CD4-positive, alpha-beta memory T cell (primary cell): ENCODE measurements at regions of chr11 and their contacts with region 1.

Region 1: GRCh38 chr11:63738720-63739360 is 29.7 kb downstream of the ZFTA start:
- DNase-seq: peak; percentile 27 to 65 (median 50)
- H3K4me3 ChIP-seq: no peak overlapping the region
- H3K4me3 Mint-ChIP-seq: no peak overlapping the region
- H3K27ac ChIP-seq: no peak overlapping the region
- H3K27ac Mint-ChIP-seq: peak overlapping the region in 2 of 7 donors; percentile 53 to 85
- H3K4me1 ChIP-seq: no peaks in the 10 kb centered on the region
- H3K4me1 Mint-ChIP-seq: peaks cover 2 to 4% (median 4%) of the 10 kb centered on the region in 4 donors
- H3K27me3 ChIP-seq: no peaks in the 10 kb centered on the region
- H3K27me3 Mint-ChIP-seq: no peaks in the 10 kb centered on the region

Region 2: DNA sequence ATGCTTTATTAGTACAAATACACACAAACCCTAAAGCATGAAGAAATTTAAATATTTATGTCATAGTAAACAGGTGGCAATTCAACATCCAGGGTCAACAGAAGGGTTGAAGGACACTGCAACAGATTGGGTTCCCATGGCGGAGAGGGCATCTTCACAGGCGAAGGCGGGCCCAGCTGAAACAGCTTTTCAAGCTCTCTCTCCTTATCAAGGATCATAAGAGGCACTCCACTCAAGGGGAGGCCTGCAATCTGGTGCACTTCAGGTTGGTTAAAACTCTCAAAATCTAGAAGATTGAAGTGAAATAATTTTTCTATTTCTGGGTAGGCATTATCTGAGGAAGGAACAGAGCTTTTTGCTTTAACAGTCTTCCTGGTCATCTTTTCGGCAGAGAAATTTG is 706.4 kb before region 1 on chr11:
- CTCF ChIA-PET with region 1: interaction called, 3 read pairs
- POLR2A ChIA-PET with region 1: no interaction called
- intact Hi-C with region 1: loop called (anchors 1 kb)
- DNase-seq: no peak
- H3K4me3 ChIP-seq: no peak overlapping the region
- H3K4me3 Mint-ChIP-seq: no peak overlapping the region
- H3K27ac ChIP-seq: no peak overlapping the region
- H3K27ac Mint-ChIP-seq: no peak overlapping the region
- H3K4me1 ChIP-seq: no peaks in the 10 kb centered on the region
- H3K4me1 Mint-ChIP-seq: peaks cover 0 to 5% (median 3%) of the 10 kb centered on the region in 4 donors
- H3K27me3 ChIP-seq: no peaks in the 10 kb centered on the region
- H3K27me3 Mint-ChIP-seq: peaks cover 12 to 42% of the 10 kb centered on the region in 2 donors

Region 3: GRCh38 chr11:63404161-63404935 is 334.5 kb before region 1 on chr11:
- CTCF ChIA-PET with region 1: no interaction called
- POLR2A ChIA-PET with region 1: no interaction called
- intact Hi-C with region 1: no loop called
- DNase-seq: no peak
- H3K4me3 ChIP-seq: no peak overlapping the region
- H3K4me3 Mint-ChIP-seq: no peak overlapping the region
- H3K27ac ChIP-seq: no peak overlapping the region
- H3K27ac Mint-ChIP-seq: no peak overlapping the region
- H3K4me1 ChIP-seq: no peaks in the 10 kb centered on the region
- H3K4me1 Mint-ChIP-seq: no peaks in the 10 kb centered on the region
- H3K27me3 ChIP-seq: no peaks in the 10 kb centered on the region
- H3K27me3 Mint-ChIP-seq: peaks cover 20 to 24% of the 10 kb centered on the region in 2 donors

Region 4: GRCh38 chr11:63573881-63574855 is 164.7 kb before region 1 on chr11:
- CTCF ChIA-PET with region 1: no interaction called
- POLR2A ChIA-PET with region 1: no interaction called
- intact Hi-C with region 1: no loop called
- DNase-seq: peak in 4 of 5 donors; percentile 27 to 52 (median 34)
- H3K4me3 ChIP-seq: peak overlapping the region; percentile 4 to 34
- H3K4me3 Mint-ChIP-seq: peak overlapping the region; percentile 84 to 94 (median 89)
- H3K27ac ChIP-seq: peak overlapping the region; percentile 36
- H3K27ac Mint-ChIP-seq: peak overlapping the region; percentile 25 to 98 (median 90)
- H3K4me1 ChIP-seq: peaks cover 15% of the 10 kb centered on the region
- H3K4me1 Mint-ChIP-seq: peaks cover 14 to 22% (median 19%) of the 10 kb centered on the region in 4 donors
- H3K27me3 ChIP-seq: no peaks in the 10 kb centered on the region
- H3K27me3 Mint-ChIP-seq: no peaks in the 10 kb centered on the region

Region 5: DNA sequence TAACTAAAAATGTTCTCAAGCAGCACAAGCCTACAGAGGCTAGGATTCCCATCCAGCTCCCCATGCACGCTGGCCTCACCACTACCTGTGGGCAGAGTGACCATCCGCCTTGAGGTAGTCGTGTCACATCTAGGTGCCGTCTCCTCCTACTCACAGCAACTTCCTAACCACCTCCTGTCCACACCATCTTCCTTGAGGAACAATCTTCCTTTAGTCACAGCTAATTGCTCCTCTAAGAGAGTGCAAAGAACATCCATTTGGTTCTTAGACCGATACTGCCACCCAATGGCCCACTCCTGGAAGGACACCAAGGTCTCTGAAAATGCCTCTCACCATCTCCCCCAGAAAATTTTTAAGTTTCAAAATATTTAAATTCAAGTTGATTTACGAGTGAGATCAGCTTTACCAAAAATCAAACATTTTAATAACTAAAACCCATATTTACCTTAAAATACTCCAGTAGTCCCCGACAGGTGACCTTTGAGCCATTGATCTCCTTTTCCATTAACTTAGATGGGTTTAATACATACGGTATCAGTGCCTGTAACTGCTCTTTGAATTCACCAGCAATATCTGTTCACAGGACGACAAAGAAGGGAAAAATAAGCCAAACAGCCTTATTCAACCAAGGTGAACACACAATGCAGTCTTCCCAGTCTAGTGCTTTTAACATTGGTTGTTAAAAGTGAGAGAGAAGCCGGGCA is 102.9 kb before region 1 on chr11:
- CTCF ChIA-PET with region 1: interaction called, 109 read pairs
- POLR2A ChIA-PET with region 1: no interaction called
- intact Hi-C with region 1: loop called (anchors 1 kb)
- DNase-seq: peak; percentile 56 to 69 (median 66)
- H3K4me3 ChIP-seq: no peak overlapping the region
- H3K4me3 Mint-ChIP-seq: no peak overlapping the region
- H3K27ac ChIP-seq: no peak overlapping the region
- H3K27ac Mint-ChIP-seq: peak overlapping the region in 1 of 7 donors; percentile 7
- H3K4me1 ChIP-seq: no peaks in the 10 kb centered on the region
- H3K4me1 Mint-ChIP-seq: peaks cover 10 to 14% (median 10%) of the 10 kb centered on the region in 4 donors
- H3K27me3 ChIP-seq: no peaks in the 10 kb centered on the region
- H3K27me3 Mint-ChIP-seq: no peaks in the 10 kb centered on the region

Region 6: GRCh38 chr11:63641727-63642126 is 97.1 kb before region 1 on chr11:
- CTCF ChIA-PET with region 1: interaction called, 109 read pairs
- POLR2A ChIA-PET with region 1: no interaction called
- intact Hi-C with region 1: loop called (anchors 1 kb)
- DNase-seq: no peak
- H3K4me3 ChIP-seq: no peak overlapping the region
- H3K4me3 Mint-ChIP-seq: no peak overlapping the region
- H3K27ac ChIP-seq: no peak overlapping the region
- H3K27ac Mint-ChIP-seq: peak overlapping the region in 3 of 7 donors; percentile 36 to 57 (median 55)
- H3K4me1 ChIP-seq: no peaks in the 10 kb centered on the region
- H3K4me1 Mint-ChIP-seq: peaks cover 7 to 19% (median 12%) of the 10 kb centered on the region in 4 donors
- H3K27me3 ChIP-seq: no peaks in the 10 kb centered on the region
- H3K27me3 Mint-ChIP-seq: no peaks in the 10 kb centered on the region

Region 7: DNA sequence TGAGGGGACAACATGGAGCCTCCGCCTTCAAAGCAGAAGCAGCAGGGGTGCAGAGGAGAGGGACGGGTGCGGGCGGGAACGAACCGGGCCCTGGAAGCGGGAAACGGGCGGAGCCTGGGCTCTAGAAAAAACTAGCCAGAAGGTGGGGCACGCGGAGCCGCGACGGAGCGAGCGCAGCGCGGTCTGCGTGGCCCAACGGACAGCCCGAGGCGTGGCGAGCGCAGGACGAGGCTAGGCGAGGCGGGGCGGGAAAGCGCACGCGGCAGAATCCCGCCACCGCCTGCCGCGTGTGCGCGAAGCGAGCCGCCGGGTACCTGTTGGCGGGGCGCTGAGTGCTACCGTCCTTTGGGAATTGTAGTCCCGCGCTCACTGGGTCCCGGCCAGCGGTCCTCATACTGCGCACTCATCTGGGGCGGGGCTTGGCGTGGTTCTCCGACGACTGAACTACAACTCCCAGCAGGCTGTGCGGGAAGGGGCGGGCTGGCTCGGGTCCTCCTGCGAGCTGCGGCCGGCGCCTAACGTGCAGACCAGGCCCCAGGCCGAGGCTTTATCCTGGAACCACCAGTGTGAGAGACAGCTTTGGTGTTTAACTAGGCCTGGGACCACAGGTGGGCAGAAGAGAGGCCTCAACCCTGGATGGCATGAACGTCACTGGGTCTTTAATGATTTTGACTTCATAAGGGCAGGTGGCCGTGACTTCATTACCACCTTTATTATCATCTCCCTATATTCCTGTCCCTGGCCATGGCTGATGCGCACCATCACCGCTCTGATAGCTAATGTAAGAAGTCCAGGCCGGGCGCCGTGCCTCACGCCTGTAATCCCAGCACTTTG is 67.3 kb before region 1 on chr11 and contains the start of gene ATL3:
- CTCF ChIA-PET with region 1: interaction called, 52 read pairs
- POLR2A ChIA-PET with region 1: interaction called, 13 read pairs
- intact Hi-C with region 1: loop called (anchors 1 kb)
- DNase-seq: peak; percentile 91 to 94 (median 92)
- H3K4me3 ChIP-seq: peak within 1 kb of the TSS; percentile 55 to 91
- H3K4me3 Mint-ChIP-seq: peak within 1 kb of the TSS; percentile 83 to 91 (median 86)
- H3K27ac ChIP-seq: peak within 1 kb of the TSS; percentile 79
- H3K27ac Mint-ChIP-seq: peak within 1 kb of the TSS; percentile 77 to 93 (median 87)
- H3K4me1 ChIP-seq: peaks cover 43% of the 10 kb centered on the region
- H3K4me1 Mint-ChIP-seq: peaks cover 20 to 41% (median 26%) of the 10 kb centered on the region in 4 donors
- H3K27me3 ChIP-seq: no peaks in the 10 kb centered on the region
- H3K27me3 Mint-ChIP-seq: no peaks in the 10 kb centered on the region
- total RNA-seq, gene ATL3: 40.4 to 43.3 TPM

Region 8: GRCh38 chr11:63681321-63682049 is 57.4 kb before region 1 on chr11 and contains the start of gene RTN3:
- CTCF ChIA-PET with region 1: interaction called, 18 read pairs
- POLR2A ChIA-PET with region 1: interaction called, 4 read pairs
- intact Hi-C with region 1: no loop called
- DNase-seq: peak; percentile 98 to 99 (median 98)
- H3K4me3 ChIP-seq: peak within 1 kb of the TSS; percentile 54 to 93
- H3K4me3 Mint-ChIP-seq: peak within 1 kb of the TSS; percentile 89 to 98 (median 92)
- H3K27ac ChIP-seq: peak within 1 kb of the TSS; percentile 86
- H3K27ac Mint-ChIP-seq: peak within 1 kb of the TSS; percentile 71 to 98 (median 91)
- H3K4me1 ChIP-seq: peaks cover 22% of the 10 kb centered on the region
- H3K4me1 Mint-ChIP-seq: peaks cover 18 to 30% (median 24%) of the 10 kb centered on the region in 4 donors
- H3K27me3 ChIP-seq: no peaks in the 10 kb centered on the region
- H3K27me3 Mint-ChIP-seq: peaks cover 0 to 1% of the 10 kb centered on the region in 2 donors
- total RNA-seq, gene RTN3: 41.7 to 41.8 TPM

Region 9: GRCh38 chr11:63710476-63711217 is 28.2 kb before region 1 on chr11:
- CTCF ChIA-PET with region 1: interaction called, 12 read pairs
- POLR2A ChIA-PET with region 1: no interaction called
- intact Hi-C with region 1: no loop called
- DNase-seq: no peak
- H3K4me3 ChIP-seq: no peak overlapping the region
- H3K4me3 Mint-ChIP-seq: no peak overlapping the region
- H3K27ac ChIP-seq: no peak overlapping the region
- H3K27ac Mint-ChIP-seq: peak overlapping the region in 3 of 7 donors; percentile 43 to 55 (median 52)
- H3K4me1 ChIP-seq: no peaks in the 10 kb centered on the region
- H3K4me1 Mint-ChIP-seq: peaks cover 3 to 7% (median 5%) of the 10 kb centered on the region in 4 donors
- H3K27me3 ChIP-seq: no peaks in the 10 kb centered on the region
- H3K27me3 Mint-ChIP-seq: no peaks in the 10 kb centered on the region